ENCODE measurements at regions of chr14 and their contacts with region 1.

Region 1: DNA sequence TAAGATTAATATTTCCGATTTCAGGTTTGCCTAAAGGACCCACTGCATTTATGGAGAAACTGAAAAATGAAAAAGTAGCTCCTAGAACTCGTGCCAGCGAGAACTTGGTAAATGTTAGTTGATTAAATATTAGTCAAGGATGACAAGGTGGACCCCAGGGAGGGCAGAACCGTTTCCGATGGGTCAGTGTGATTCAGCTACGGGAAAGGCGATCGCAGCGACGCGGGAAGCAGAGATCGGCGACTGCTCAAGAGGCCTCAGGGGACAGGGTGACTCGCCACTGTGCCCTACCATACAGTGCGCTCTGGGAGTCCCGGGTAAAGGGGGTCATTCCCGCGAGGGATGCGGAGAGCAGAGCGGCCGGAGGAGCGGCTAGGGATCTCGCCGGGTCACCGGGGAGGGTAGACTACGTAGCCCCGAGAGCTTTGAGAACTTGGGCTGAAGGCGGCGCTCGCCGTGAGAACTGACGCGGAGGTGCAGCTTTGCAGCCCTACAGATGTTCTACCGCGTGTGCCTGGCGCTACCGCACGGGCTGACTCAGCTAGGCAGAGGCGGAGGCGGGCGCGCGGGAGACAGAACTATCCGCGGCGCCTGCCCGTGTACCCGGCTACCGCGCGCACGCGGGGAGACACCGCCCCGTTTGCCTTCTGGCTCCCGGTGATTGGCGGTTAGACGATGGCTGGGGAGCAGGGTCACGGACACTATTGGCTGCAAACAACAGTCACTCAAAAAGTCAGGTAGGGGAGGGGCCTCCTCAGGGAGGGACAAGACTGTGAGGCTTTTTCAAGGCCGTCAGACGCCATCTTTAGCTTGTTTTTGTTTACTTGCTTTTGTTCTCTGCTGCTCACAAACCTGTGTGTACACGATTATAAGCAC is 3.2 kb downstream of the C14orf93 start:
- DNase-seq: peak; percentile 97
- H3K4me3 ChIP-seq: peak overlapping the region; percentile 63
- H3K4me3 Mint-ChIP-seq: peak overlapping the region; percentile 100
- H3K27ac Mint-ChIP-seq: peak overlapping the region; percentile 99
- H3K4me1 ChIP-seq: peaks cover 14% of the 10 kb centered on the region
- H3K4me1 Mint-ChIP-seq: peaks cover 15% of the 10 kb centered on the region
- H3K27me3 ChIP-seq: no peaks in the 10 kb centered on the region
- H3K27me3 Mint-ChIP-seq: no peaks in the 10 kb centered on the region
- CTCF ChIP-seq: peak; percentile 13 to 44

Region 2: GRCh38 chr14:22726012-22726411 is 280.8 kb before region 1 on chr14:
- CTCF ChIA-PET with region 1: no interaction called
- POLR2A ChIA-PET with region 1: no interaction called
- intact Hi-C with region 1: no loop called
- DNase-seq: no peak
- H3K4me3 ChIP-seq: no peak overlapping the region
- H3K4me3 Mint-ChIP-seq: no peak overlapping the region
- H3K27ac Mint-ChIP-seq: no peak overlapping the region
- H3K4me1 ChIP-seq: no peaks in the 10 kb centered on the region
- H3K4me1 Mint-ChIP-seq: no peaks in the 10 kb centered on the region
- H3K27me3 ChIP-seq: no peaks in the 10 kb centered on the region
- H3K27me3 Mint-ChIP-seq: no peaks in the 10 kb centered on the region
- CTCF ChIP-seq: no peak

Region 3: GRCh38 chr14:22819151-22819988 is 187.4 kb before region 1 on chr14:
- CTCF ChIA-PET with region 1: no interaction called
- POLR2A ChIA-PET with region 1: no interaction called
- intact Hi-C with region 1: no loop called
- DNase-seq: peak; percentile 93 to 95
- H3K4me3 ChIP-seq: peak overlapping the region; percentile 13
- H3K4me3 Mint-ChIP-seq: peak overlapping the region; percentile 74
- H3K27ac Mint-ChIP-seq: peak overlapping the region; percentile 94
- H3K4me1 ChIP-seq: peaks cover 73% of the 10 kb centered on the region
- H3K4me1 Mint-ChIP-seq: peaks cover 45% of the 10 kb centered on the region
- H3K27me3 ChIP-seq: no peaks in the 10 kb centered on the region
- H3K27me3 Mint-ChIP-seq: no peaks in the 10 kb centered on the region
- CTCF ChIP-seq: no peak

Region 4: GRCh38 chr14:22829661-22830442 is 176.9 kb before region 1 on chr14 and contains the start of gene MRPL52:
- CTCF ChIA-PET with region 1: no interaction called
- POLR2A ChIA-PET with region 1: no interaction called
- intact Hi-C with region 1: no loop called
- DNase-seq: peak; percentile 85 to 89
- H3K4me3 ChIP-seq: peak within 1 kb of the TSS; percentile 84
- H3K4me3 Mint-ChIP-seq: peak within 1 kb of the TSS; percentile 92
- H3K27ac Mint-ChIP-seq: peak within 1 kb of the TSS; percentile 98
- H3K4me1 ChIP-seq: peaks cover 7% of the 10 kb centered on the region
- H3K4me1 Mint-ChIP-seq: peaks cover 16% of the 10 kb centered on the region
- H3K27me3 ChIP-seq: no peaks in the 10 kb centered on the region
- H3K27me3 Mint-ChIP-seq: no peaks in the 10 kb centered on the region
- CTCF ChIP-seq: no peak
- total RNA-seq, gene MRPL52: 149 TPM in 2 replicates

Region 5: GRCh38 chr14:22918804-22919600 is 87.8 kb before region 1 on chr14 and contains the start of gene RBM23:
- CTCF ChIA-PET with region 1: no interaction called
- POLR2A ChIA-PET with region 1: no interaction called
- intact Hi-C with region 1: no loop called
- DNase-seq: peak; percentile 98
- H3K4me3 ChIP-seq: peak within 1 kb of the TSS; percentile 65
- H3K4me3 Mint-ChIP-seq: peak within 1 kb of the TSS; percentile 90
- H3K27ac Mint-ChIP-seq: peak within 1 kb of the TSS; percentile 100
- H3K4me1 ChIP-seq: peaks cover 8% of the 10 kb centered on the region
- H3K4me1 Mint-ChIP-seq: peaks cover 6% of the 10 kb centered on the region
- H3K27me3 ChIP-seq: no peaks in the 10 kb centered on the region
- H3K27me3 Mint-ChIP-seq: peaks cover 2% of the 10 kb centered on the region
- CTCF ChIP-seq: no peak
- total RNA-seq, gene RBM23: 67.0 and 70.0 TPM in 2 replicates

Region 6: GRCh38 chr14:22994762-22995275 is 12.0 kb before region 1 on chr14:
- CTCF ChIA-PET with region 1: interaction called, 43 read pairs
- POLR2A ChIA-PET with region 1: interaction called, 4 read pairs
- intact Hi-C with region 1: no loop called
- DNase-seq: peak in 1 of 2 experiments; percentile 56
- H3K4me3 ChIP-seq: no peak overlapping the region
- H3K4me3 Mint-ChIP-seq: peak overlapping the region; percentile 12
- H3K27ac Mint-ChIP-seq: peak overlapping the region; percentile 51
- H3K4me1 ChIP-seq: peaks cover 10% of the 10 kb centered on the region
- H3K4me1 Mint-ChIP-seq: peaks cover 3% of the 10 kb centered on the region
- H3K27me3 ChIP-seq: no peaks in the 10 kb centered on the region
- H3K27me3 Mint-ChIP-seq: no peaks in the 10 kb centered on the region
- CTCF ChIP-seq: peak; percentile 58 to 60

Region 7: GRCh38 chr14:23034483-23035302 is 27.9 kb after region 1 on chr14 and contains the start of gene PSMB5:
- CTCF ChIA-PET with region 1: interaction called, 7 read pairs
- POLR2A ChIA-PET with region 1: interaction called, 3 read pairs
- intact Hi-C with region 1: loop called (anchors 2 kb)
- DNase-seq: peak; percentile 89 to 95
- H3K4me3 ChIP-seq: peak within 1 kb of the TSS; percentile 72
- H3K4me3 Mint-ChIP-seq: peak within 1 kb of the TSS; percentile 98
- H3K27ac Mint-ChIP-seq: peak within 1 kb of the TSS; percentile 99
- H3K4me1 ChIP-seq: peaks cover 6% of the 10 kb centered on the region
- H3K4me1 Mint-ChIP-seq: peaks cover 7% of the 10 kb centered on the region
- H3K27me3 ChIP-seq: no peaks in the 10 kb centered on the region
- H3K27me3 Mint-ChIP-seq: no peaks in the 10 kb centered on the region
- CTCF ChIP-seq: no peak
- total RNA-seq, gene PSMB5: 172 and 189 TPM in 2 replicates

Region 8: DNA sequence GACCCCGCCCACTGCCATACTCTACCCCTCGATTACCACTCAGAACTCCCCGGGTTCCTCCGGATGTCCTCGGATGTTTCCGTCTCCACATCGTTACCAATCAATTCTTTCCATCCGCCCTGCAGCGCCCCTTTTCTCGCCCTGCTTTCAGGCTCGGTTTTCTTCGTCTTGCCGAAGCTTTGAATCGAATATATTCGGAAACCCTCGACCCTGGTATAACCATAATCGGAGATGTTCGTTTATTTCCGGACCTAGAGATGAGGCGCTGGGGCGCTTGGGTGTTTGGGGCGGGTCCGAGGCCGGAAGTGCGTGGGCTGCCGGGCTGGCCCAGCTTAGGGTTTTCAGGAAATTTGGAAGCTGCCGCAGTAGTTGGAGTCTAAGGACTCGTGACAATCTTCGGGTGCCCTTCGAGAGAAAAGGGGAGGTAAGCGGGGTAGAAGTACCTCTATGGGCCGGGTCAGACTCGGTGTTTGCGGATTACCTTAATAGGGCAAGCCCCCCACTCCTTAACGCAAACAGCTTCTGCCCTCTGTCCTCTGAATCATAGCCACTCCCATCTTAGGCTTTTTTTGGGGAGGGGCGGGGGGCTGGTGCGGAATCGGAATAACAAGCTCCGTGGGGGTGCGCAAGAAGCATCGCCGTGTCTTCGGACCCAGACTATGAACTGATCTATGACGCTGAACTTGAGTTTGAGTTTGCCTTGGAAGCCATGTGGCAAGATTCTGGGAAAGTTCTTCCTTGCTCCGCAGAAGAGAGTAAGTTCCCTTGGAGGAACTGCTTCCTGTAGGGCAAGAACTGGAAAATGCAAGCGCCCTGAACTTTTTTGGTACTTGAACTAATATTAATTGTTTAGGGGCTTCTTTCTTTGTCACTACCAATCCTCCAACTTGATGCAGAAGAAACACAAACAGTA is 88.7 kb after region 1 on chr14 and contains the start of gene C14orf119:
- CTCF ChIA-PET with region 1: interaction called, 10 read pairs
- POLR2A ChIA-PET with region 1: interaction called, 17 read pairs
- intact Hi-C with region 1: no loop called
- DNase-seq: peak; percentile 98 to 99
- H3K4me3 ChIP-seq: peak within 1 kb of the TSS; percentile 79
- H3K4me3 Mint-ChIP-seq: no peak within 1 kb of the TSS
- H3K27ac Mint-ChIP-seq: no peak within 1 kb of the TSS
- H3K4me1 ChIP-seq: peaks cover 3% of the 10 kb centered on the region; the same call in 1 of the 2 replicates
- H3K4me1 Mint-ChIP-seq: peaks cover 10% of the 10 kb centered on the region
- H3K27me3 ChIP-seq: no peaks in the 10 kb centered on the region
- H3K27me3 Mint-ChIP-seq: no peaks in the 10 kb centered on the region
- CTCF ChIP-seq: no peak
- total RNA-seq, gene C14orf119: 46.3 and 52.0 TPM in 2 replicates

Measured in Caco-2 (cell line).